ENCODE measurements at regions of chr16 and their contacts with region 1.

Region 1: DNA sequence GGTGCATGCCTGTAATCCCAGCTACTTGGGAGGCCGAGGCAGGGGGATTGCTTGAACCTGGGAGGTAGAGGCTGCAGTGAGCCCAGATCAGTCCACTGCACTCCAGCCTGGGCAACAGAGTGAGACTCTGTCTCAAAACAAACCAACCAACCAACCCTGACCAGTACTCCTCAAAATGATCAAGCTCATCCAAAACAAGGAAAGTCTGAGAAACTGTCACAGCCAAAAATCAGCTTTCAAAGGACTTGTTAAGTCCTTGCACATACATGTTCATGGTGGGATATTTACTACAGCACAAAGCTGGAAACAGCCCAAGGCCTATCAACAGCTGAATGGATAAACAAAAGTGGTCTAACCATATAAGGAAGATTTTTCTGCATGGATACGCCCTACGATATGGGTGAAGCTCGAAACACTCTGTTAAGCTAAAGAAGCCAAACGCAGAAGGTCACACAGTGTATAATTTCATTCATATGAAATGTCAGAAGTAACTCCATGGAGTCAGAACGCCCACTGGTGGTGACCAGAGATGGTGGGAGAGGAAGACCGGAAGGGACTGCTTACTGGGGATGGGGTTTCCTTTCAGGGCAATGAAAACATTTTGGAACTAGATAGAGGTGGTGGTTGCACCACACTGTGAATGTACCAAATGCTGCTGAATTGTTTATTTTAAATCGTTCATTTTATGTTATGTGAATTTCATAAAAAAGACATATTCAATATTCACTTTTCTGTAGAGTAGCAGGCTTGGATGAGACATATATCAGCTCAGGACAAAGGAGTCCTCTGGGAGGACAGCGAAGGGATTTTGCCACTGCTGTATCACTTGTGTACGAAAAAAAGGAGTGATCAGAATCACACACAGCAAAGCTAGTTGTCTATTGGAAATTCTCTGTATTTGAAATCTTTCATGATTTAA is 17.7 kb downstream of the CCL17 start:
- DNase-seq: peak; percentile 39
- H3K4me3 ChIP-seq: no peak overlapping the region
- H3K27ac ChIP-seq: no peak overlapping the region
- H3K27me3 ChIP-seq: no peaks in the 10 kb centered on the region
- CTCF ChIP-seq: peak; percentile 86

Region 2: GRCh38 chr16:57084257-57084770 is 338.0 kb before region 1 on chr16:
- CTCF ChIA-PET with region 1: interaction called, 13 read pairs
- POLR2A ChIA-PET with region 1: no interaction called
- DNase-seq: peak; percentile 32
- H3K4me3 ChIP-seq: no peak overlapping the region
- H3K27ac ChIP-seq: no peak overlapping the region
- H3K27me3 ChIP-seq: no peaks in the 10 kb centered on the region
- CTCF ChIP-seq: peak; percentile 99

Region 3: GRCh38 chr16:57300387-57301125 is 121.7 kb before region 1 on chr16:
- CTCF ChIA-PET with region 1: interaction called, 286 read pairs
- POLR2A ChIA-PET with region 1: interaction called, 13 read pairs
- DNase-seq: peak; percentile 99
- H3K4me3 ChIP-seq: peak overlapping the region; percentile 65
- H3K27ac ChIP-seq: peak overlapping the region; percentile 68
- H3K27me3 ChIP-seq: peaks cover 21% of the 10 kb centered on the region
- CTCF ChIP-seq: peak; percentile 98

Region 4: GRCh38 chr16:57403965-57404817 is 18.1 kb before region 1 on chr16 and contains the start of gene CCL17:
- CTCF ChIA-PET with region 1: interaction called, 13 read pairs
- POLR2A ChIA-PET with region 1: no interaction called
- DNase-seq: no peak
- H3K4me3 ChIP-seq: no peak within 1 kb of the TSS
- H3K27ac ChIP-seq: no peak within 1 kb of the TSS
- H3K27me3 ChIP-seq: peaks cover 48% of the 10 kb centered on the region
- CTCF ChIP-seq: no peak
- polyA plus RNA-seq, gene CCL17: not detected in 2 replicates

Region 5: DNA sequence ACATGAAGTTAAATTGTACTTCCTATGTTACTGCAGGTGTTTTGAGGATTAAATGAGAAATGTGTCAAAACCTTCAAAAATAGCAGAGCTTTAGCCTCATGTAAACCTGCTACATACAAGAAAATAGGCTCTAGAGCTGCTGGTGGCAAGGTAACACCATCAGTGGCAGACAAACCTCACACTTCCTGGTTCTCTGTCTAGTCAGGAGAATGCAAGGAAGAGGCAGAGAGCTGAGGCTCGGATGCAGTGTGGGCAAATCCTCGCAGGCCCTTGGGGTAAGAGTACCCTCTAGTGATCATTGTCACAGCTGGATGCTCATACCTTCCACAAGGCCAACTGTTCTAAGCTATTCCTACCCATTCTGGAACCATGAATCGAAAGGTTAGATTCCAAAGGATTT is 10.7 kb after region 1 on chr16:
- CTCF ChIA-PET with region 1: interaction called, 16 read pairs
- POLR2A ChIA-PET with region 1: no interaction called
- DNase-seq: no peak
- H3K4me3 ChIP-seq: no peak overlapping the region
- H3K27ac ChIP-seq: no peak overlapping the region
- H3K27me3 ChIP-seq: no peaks in the 10 kb centered on the region
- CTCF ChIP-seq: no peak

Region 6: GRCh38 chr16:57519796-57520360 is 97.6 kb after region 1 on chr16:
- CTCF ChIA-PET with region 1: interaction called, 63 read pairs
- POLR2A ChIA-PET with region 1: no interaction called
- DNase-seq: no peak
- H3K4me3 ChIP-seq: no peak overlapping the region
- H3K27ac ChIP-seq: no peak overlapping the region
- H3K27me3 ChIP-seq: no peaks in the 10 kb centered on the region
- CTCF ChIP-seq: peak; percentile 99

Region 7: DNA sequence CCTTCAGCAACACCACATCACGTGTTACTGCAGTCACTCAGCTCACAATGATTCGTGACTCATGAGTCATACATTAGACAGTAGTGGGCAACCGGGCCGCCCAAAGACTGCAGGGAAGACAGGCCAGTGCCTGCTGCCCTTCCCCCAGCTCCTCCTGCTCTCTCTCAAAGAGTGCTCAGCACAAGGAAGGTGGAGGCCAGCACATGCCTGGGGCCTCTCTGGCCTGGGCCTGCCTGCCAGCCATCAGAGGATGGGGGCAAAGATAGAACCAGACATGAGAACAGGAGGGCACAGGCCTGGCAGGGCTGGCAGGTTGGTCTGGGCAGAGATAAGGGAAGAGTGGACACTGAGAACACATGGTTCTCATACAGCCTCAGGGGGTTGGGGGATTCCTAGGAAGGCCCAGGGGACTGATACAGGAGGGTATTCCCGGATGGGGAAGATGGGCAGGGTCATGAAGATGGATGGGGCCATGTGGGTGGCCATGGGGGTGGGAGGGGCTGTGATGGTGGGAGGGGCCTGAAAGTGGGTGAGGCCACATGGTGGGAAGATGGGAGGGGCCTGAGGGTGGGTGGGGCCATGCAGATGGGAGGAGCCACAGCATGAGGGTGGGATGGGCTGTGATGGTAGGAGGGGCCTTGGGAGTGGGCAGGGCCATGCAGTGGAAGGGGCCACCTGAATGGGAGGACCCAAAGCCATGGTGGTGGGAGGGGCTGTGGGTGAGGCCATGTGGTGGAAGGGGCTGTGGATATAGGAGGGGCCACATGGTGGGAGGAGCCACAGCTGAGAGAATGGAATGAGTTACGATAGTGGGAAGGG is 342.3 kb after region 1 on chr16:
- CTCF ChIA-PET with region 1: no interaction called
- POLR2A ChIA-PET with region 1: no interaction called
- DNase-seq: peak; percentile 41
- H3K4me3 ChIP-seq: no peak overlapping the region
- H3K27ac ChIP-seq: peak overlapping the region; percentile 73
- H3K27me3 ChIP-seq: no peaks in the 10 kb centered on the region
- CTCF ChIP-seq: no peak